OCI-LY7 (cell line): ENCODE measurements at regions of chr2 and their contacts with region 1.

Region 1: DNA sequence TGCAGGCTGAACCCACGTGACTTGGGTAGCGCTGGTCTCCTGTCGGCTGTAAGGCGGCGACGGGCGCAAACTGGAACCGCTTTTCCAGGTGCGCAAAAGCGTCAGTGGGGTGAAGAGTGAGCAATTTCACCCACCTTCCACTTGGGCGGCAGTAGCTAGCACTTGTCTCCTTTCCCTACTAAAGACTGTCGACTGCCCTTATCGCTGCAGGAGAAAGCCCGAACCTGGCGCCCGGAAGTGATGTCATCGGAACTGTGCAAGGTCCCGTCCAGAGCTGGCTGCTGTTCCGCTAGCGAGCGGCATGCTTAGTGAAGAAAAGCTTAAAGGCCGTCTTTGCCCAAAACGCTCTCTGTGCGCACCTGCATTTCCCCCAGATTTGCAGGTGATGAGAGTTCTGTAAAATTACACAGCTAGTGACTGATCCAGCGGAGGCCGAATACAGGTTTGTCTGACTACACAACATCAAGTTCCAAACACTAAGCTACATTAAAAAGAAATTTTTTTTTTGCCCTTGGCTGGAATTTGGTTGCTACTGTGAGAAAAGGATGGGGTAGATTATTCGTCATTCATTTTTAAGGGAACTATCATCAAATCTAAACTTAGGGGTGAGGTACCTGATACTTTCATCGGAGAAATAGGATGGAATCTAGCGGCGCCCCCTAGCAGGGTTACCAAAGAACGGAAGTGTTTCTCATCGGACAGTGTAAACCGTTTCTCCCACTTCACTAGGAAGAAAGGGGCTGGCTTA is at the start of gene OSGEPL1:
- DNase-seq: peak; percentile 96
- H3K4me3 ChIP-seq: peak within 1 kb of the TSS; percentile 82
- H3K27ac ChIP-seq: peak within 1 kb of the TSS; percentile 97
- H3K4me1 ChIP-seq: peaks cover 20% of the 10 kb centered on the region
- CTCF ChIP-seq: peak; percentile 85
- total RNA-seq, gene OSGEPL1: 8.7 and 10.4 TPM in 2 replicates

Region 2: DNA sequence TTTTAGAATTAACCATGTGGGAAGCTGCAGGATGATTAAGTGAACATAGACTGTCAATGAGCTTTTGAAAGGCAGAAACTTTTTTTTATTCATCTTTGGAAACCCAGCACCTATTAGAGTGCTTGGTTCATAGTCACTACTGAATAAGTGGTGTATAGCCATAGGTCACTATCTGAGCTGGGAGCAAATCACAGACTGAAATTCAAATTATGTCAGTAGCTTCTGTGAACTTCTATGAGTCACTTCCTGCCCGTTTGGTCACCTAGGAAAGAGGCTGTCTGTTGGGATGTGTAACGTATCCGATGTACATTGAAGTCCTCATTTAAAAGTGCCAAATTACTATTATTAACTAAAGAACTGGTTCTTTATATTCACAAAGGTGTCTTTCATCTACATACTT is 161.7 kb before region 1 on chr2:
- CTCF ChIA-PET with region 1: no interaction called
- POLR2A ChIA-PET with region 1: no interaction called
- intact Hi-C with region 1: no loop called
- DNase-seq: no peak
- H3K4me3 ChIP-seq: no peak overlapping the region
- H3K27ac ChIP-seq: no peak overlapping the region
- H3K4me1 ChIP-seq: no peaks in the 10 kb centered on the region
- CTCF ChIP-seq: no peak

Region 3: GRCh38 chr2:189661148-189661956 is 101.4 kb before region 1 on chr2 and contains the start of gene ASNSD1:
- CTCF ChIA-PET with region 1: interaction called, 4 read pairs
- POLR2A ChIA-PET with region 1: interaction called, 21 read pairs
- intact Hi-C with region 1: loop called (anchors 1 kb)
- DNase-seq: peak; percentile 100
- H3K4me3 ChIP-seq: peak within 1 kb of the TSS; percentile 90
- H3K27ac ChIP-seq: peak within 1 kb of the TSS; percentile 38
- H3K4me1 ChIP-seq: peaks cover 41% of the 10 kb centered on the region
- CTCF ChIP-seq: peak; percentile 99
- total RNA-seq, gene ASNSD1: 36.3 and 36.8 TPM in 2 replicates

Region 4: GRCh38 chr2:189803431-189803830 is 40.7 kb after region 1 on chr2:
- CTCF ChIA-PET with region 1: no interaction called
- POLR2A ChIA-PET with region 1: no interaction called
- intact Hi-C with region 1: no loop called
- DNase-seq: no peak
- H3K4me3 ChIP-seq: no peak overlapping the region
- H3K27ac ChIP-seq: no peak overlapping the region
- H3K4me1 ChIP-seq: peaks cover 4% of the 10 kb centered on the region
- CTCF ChIP-seq: no peak